IMR-90 (cell line): ENCODE measurements at regions of chr2 and their contacts with region 1.

Region 1: GRCh38 chr2:176096986-176097819 is 2.4 kb upstream of the HOXD12 start:
- DNase-seq: peak; percentile 48
- ATAC-seq: peak; percentile 95
- H3K4me3 ChIP-seq: peak overlapping the region; percentile 35
- H3K27ac ChIP-seq: no peak overlapping the region
- H3K4me1 ChIP-seq: peaks cover 3% of the 10 kb centered on the region; the same call in 1 of the 2 replicates
- H3K27me3 ChIP-seq: peaks cover 92% of the 10 kb centered on the region
- CTCF ChIP-seq: peak; percentile 76
- POLR2A ChIP-seq: no peak
- RAD21 ChIP-seq: peak; percentile 83

Region 2: GRCh38 chr2:174748948-174749347 is 1348.3 kb before region 1 on chr2:
- CTCF ChIA-PET with region 1: no interaction called
- POLR2A ChIA-PET with region 1: no interaction called
- dilution Hi-C with region 1: no loop called
- in situ Hi-C with region 1: loop called (anchors 25 kb)
- intact Hi-C with region 1: no loop called
- DNase-seq: peak; percentile 50
- ATAC-seq: peak; percentile 94
- H3K4me3 ChIP-seq: no peak overlapping the region
- H3K27ac ChIP-seq: no peak overlapping the region
- H3K4me1 ChIP-seq: no peaks in the 10 kb centered on the region; the same call in 1 of the 2 replicates
- H3K27me3 ChIP-seq: peaks cover 6% of the 10 kb centered on the region
- CTCF ChIP-seq: peak; percentile 77
- POLR2A ChIP-seq: no peak
- RAD21 ChIP-seq: peak; percentile 82

Region 3: DNA sequence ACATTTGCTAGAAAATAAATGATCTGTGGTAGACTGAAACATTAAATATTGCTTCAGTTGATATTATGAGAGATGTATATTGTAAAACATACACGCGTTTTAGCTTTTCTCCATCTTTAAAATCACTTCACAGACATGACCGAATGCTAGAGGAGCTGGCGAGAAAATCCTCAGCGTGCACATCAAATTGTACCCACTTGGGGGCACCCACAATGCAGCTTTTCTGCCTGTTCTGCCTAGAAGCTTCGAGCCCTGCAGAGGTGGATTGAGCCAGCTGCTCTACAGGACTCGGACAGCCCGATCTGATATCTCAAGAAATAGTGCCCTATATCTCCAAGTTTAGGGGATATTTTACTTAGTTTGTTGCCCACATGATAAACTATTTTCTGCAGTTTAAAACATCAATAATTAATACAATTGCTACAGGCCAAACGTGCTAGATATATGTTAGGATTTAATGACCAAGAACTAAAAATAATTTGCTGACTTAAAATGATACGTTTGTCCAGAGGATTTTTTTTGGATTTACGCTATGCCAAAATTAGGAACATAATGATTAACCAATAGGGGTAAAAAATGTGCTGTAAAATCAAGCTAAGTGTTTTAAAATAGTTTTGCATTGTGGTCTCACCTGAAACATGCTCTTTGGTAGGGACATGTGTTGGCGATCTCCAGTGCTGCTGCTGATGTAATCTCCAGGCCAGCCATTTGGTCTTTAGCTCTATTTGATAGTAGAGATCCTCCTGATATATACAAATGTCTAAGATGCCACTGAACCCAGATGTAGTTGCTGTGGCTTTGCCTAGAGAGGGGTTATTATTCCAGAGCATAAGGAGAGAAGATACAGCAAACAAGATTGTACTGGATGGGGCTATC is 893.3 kb before region 1 on chr2:
- CTCF ChIA-PET with region 1: interaction called, 3 read pairs
- POLR2A ChIA-PET with region 1: no interaction called
- dilution Hi-C with region 1: no loop called
- in situ Hi-C with region 1: no loop called
- intact Hi-C with region 1: loop called (anchors 5 kb)
- DNase-seq: peak; percentile 47
- ATAC-seq: peak; percentile 99
- H3K4me3 ChIP-seq: no peak overlapping the region
- H3K27ac ChIP-seq: no peak overlapping the region
- H3K4me1 ChIP-seq: no peaks in the 10 kb centered on the region
- H3K27me3 ChIP-seq: peaks cover 4% of the 10 kb centered on the region
- CTCF ChIP-seq: peak; percentile 65
- POLR2A ChIP-seq: no peak
- RAD21 ChIP-seq: peak; percentile 59

Region 4: GRCh38 chr2:175309799-175310198 is 787.4 kb before region 1 on chr2:
- CTCF ChIA-PET with region 1: no interaction called
- POLR2A ChIA-PET with region 1: no interaction called
- dilution Hi-C with region 1: no loop called
- in situ Hi-C with region 1: no loop called
- intact Hi-C with region 1: loop called (anchors 2 kb)
- DNase-seq: peak; percentile 10
- ATAC-seq: peak; percentile 75
- H3K4me3 ChIP-seq: no peak overlapping the region
- H3K27ac ChIP-seq: no peak overlapping the region
- H3K4me1 ChIP-seq: no peaks in the 10 kb centered on the region
- H3K27me3 ChIP-seq: peaks cover 4% of the 10 kb centered on the region
- CTCF ChIP-seq: peak; percentile 34
- POLR2A ChIP-seq: no peak
- RAD21 ChIP-seq: peak; percentile 21; the same call in 1 of the 2 replicates

Region 5: DNA sequence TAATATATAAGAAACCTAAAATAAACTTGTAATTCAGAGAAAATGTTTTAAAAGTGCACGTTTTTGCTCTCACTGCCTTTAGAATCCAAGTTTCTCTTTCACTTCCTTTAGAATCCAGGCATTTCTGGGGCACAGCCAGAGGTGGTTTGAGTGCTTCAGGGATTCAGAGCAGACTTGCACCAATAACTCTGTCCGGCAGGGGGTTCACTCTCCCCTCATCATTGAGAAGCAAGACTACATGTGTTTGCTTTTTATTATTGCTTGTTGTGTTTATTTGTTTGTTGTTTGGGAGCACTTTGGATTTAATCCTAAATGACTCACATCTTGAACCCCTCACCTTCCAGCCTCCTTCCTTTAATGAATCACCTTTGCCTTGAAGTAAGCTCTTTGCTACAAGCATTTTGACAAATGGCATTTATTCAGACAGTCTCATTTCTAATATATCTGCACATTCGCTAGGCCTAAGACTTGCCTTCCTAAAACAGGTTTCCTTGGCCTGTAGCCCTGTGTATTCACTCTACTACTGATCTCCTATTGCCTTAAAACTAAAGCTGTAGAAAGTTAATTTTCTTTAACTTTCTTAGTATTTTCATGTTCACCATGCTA is 682.2 kb before region 1 on chr2:
- CTCF ChIA-PET with region 1: interaction called, 3 read pairs
- POLR2A ChIA-PET with region 1: no interaction called
- dilution Hi-C with region 1: no loop called
- in situ Hi-C with region 1: no loop called
- intact Hi-C with region 1: loop called (anchors 2 kb)
- DNase-seq: peak; percentile 54
- ATAC-seq: peak; percentile 75
- H3K4me3 ChIP-seq: no peak overlapping the region
- H3K27ac ChIP-seq: no peak overlapping the region
- H3K4me1 ChIP-seq: no peaks in the 10 kb centered on the region
- H3K27me3 ChIP-seq: no peaks in the 10 kb centered on the region
- CTCF ChIP-seq: peak; percentile 45
- POLR2A ChIP-seq: no peak
- RAD21 ChIP-seq: peak; percentile 31

Region 6: DNA sequence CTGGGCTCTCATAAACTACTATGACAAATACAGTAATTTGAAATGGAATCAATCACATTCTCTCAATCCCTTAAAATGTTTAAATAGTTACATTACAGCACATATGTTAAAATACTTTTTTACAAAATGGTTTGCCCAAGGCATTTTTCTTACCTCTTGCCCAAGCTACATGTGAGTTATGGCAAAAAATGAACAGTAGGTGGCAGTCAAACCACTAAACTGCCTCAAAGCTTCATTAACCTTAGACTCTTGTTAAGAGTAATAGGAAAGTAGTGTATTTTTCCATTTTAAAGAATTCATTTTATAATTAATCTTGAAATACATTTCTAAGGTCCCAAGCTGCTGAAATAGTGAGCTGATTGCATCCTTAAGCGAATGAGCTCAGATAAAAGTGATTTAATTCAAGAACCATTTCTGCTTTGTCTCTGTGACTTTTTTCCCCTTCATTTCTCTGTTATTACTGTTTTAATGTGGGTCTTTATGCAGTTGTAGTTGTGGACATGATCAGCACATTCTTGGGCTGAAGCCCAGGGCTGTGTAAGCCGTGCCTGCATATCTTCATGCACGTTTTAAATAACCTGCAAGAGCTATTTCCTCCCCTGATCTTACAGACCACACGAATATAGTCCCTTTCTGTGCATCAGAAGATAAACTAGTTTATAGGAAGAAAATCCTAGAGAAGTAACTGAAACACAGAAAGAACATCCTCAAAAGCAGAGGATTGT is 406.9 kb before region 1 on chr2:
- CTCF ChIA-PET with region 1: interaction called, 7 read pairs
- POLR2A ChIA-PET with region 1: no interaction called
- dilution Hi-C with region 1: no loop called
- in situ Hi-C with region 1: loop called (anchors 10 kb)
- intact Hi-C with region 1: loop called (anchors 1 kb)
- DNase-seq: peak; percentile 78
- ATAC-seq: peak; percentile 82
- H3K4me3 ChIP-seq: no peak overlapping the region
- H3K27ac ChIP-seq: no peak overlapping the region
- H3K4me1 ChIP-seq: no peaks in the 10 kb centered on the region
- H3K27me3 ChIP-seq: peaks cover 2% of the 10 kb centered on the region
- CTCF ChIP-seq: peak; percentile 85
- POLR2A ChIP-seq: 0 out of 2 replicates have a peak, but pooled peaks have one; percentile 19
- RAD21 ChIP-seq: peak; percentile 82